GM12878 (cell line): ENCODE measurements at regions of chr3 and their contacts with region 1.

Region 1: GRCh38 chr3:135229018-135229495 is 434.0 kb downstream of the EPHB1 start:
- DNase-seq: no peak
- ATAC-seq: no peak
- H3K4me3 ChIP-seq: no peak overlapping the region
- H3K27ac ChIP-seq: no peak overlapping the region
- H3K4me1 ChIP-seq: peaks cover 20% of the 10 kb centered on the region
- H3K27me3 ChIP-seq: no peaks in the 10 kb centered on the region
- CTCF ChIP-seq: no peak
- EP300 ChIP-seq: no peak
- POLR2A ChIP-seq: no peak
- RAD21 ChIP-seq: no peak

Region 2: GRCh38 chr3:134965865-134966481 is 263.1 kb before region 1 on chr3:
- CTCF ChIA-PET with region 1: no interaction called
- POLR2A ChIA-PET with region 1: no interaction called
- RAD21 ChIA-PET with region 1: no interaction called
- SMC1A ChIA-PET with region 1: no interaction called
- in situ Hi-C with region 1: no loop called
- intact Hi-C with region 1: no loop called
- DNase-seq: no peak
- ATAC-seq: no peak
- H3K4me3 ChIP-seq: no peak overlapping the region
- H3K27ac ChIP-seq: no peak overlapping the region
- H3K4me1 ChIP-seq: no peaks in the 10 kb centered on the region
- H3K27me3 ChIP-seq: no peaks in the 10 kb centered on the region
- CTCF ChIP-seq: no peak
- EP300 ChIP-seq: no peak
- POLR2A ChIP-seq: no peak
- RAD21 ChIP-seq: no peak

Region 3: GRCh38 chr3:135199137-135199536 is 29.9 kb before region 1 on chr3:
- CTCF ChIA-PET with region 1: interaction called, 3 read pairs
- POLR2A ChIA-PET with region 1: interaction called, 3 read pairs
- RAD21 ChIA-PET with region 1: interaction called, 11 read pairs
- SMC1A ChIA-PET with region 1: interaction called, 10 read pairs
- in situ Hi-C with region 1: no loop called
- intact Hi-C with region 1: no loop called
- DNase-seq: peak; percentile 20
- ATAC-seq: peak; percentile 44
- H3K4me3 ChIP-seq: no peak overlapping the region
- H3K27ac ChIP-seq: no peak overlapping the region
- H3K4me1 ChIP-seq: peaks cover 4% of the 10 kb centered on the region
- H3K27me3 ChIP-seq: no peaks in the 10 kb centered on the region
- CTCF ChIP-seq: no peak
- EP300 ChIP-seq: no peak
- POLR2A ChIP-seq: no peak
- RAD21 ChIP-seq: no peak

Region 4: GRCh38 chr3:135213822-135214221 is 15.2 kb before region 1 on chr3:
- CTCF ChIA-PET with region 1: interaction called, 8 read pairs
- POLR2A ChIA-PET with region 1: no interaction called
- RAD21 ChIA-PET with region 1: interaction called, 3 read pairs
- SMC1A ChIA-PET with region 1: interaction called, 13 read pairs
- in situ Hi-C with region 1: no loop called
- intact Hi-C with region 1: no loop called
- DNase-seq: no peak
- ATAC-seq: no peak
- H3K4me3 ChIP-seq: no peak overlapping the region
- H3K27ac ChIP-seq: no peak overlapping the region
- H3K4me1 ChIP-seq: 0 out of 2 replicates have a peak, but pooled peaks cover 4% of the 10 kb centered on the region
- H3K27me3 ChIP-seq: no peaks in the 10 kb centered on the region
- CTCF ChIP-seq: no peak
- EP300 ChIP-seq: no peak
- POLR2A ChIP-seq: no peak
- RAD21 ChIP-seq: no peak

Region 5: DNA sequence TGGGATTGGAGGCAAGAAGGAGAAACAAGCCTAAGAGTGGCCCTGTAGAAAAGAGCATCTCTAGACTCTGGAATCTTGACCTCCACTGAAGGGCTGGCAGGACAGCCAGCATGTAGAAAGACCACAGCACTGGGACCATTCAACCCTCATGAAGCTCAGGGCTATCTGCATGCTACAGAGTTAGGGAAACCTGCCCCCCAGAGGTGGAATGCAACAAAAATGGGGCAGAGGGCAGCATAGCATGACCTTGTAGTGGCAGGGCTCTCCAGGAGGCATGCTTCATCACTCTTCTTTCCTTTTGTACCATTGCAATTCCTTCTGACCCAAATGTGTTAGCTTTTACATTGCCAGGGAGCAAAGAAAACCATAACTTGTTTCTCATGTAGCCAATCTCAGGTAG is 11.4 kb after region 1 on chr3:
- CTCF ChIA-PET with region 1: interaction called, 13 read pairs
- POLR2A ChIA-PET with region 1: interaction called, 3 read pairs
- RAD21 ChIA-PET with region 1: interaction called, 21 read pairs
- SMC1A ChIA-PET with region 1: interaction called, 7 read pairs
- in situ Hi-C with region 1: no loop called
- intact Hi-C with region 1: no loop called
- DNase-seq: no peak
- ATAC-seq: peak; percentile 89
- H3K4me3 ChIP-seq: no peak overlapping the region
- H3K27ac ChIP-seq: no peak overlapping the region
- H3K4me1 ChIP-seq: no peaks in the 10 kb centered on the region
- H3K27me3 ChIP-seq: no peaks in the 10 kb centered on the region
- CTCF ChIP-seq: peak; percentile 25 to 49 (median 34); a peak in 4 of 6 replicates
- EP300 ChIP-seq: no peak
- POLR2A ChIP-seq: no peak
- RAD21 ChIP-seq: peak; percentile 51; the same call in 1 of the 2 replicates